GM12878 (cell line): ENCODE measurements at regions of chr11 and their contacts with region 1.

Region 1: GRCh38 chr11:96012086-96012824 is 88.3 kb upstream of the MTMR2 start:
- DNase-seq: peak; percentile 96
- ATAC-seq: peak; percentile 93
- H3K4me3 ChIP-seq: no peak overlapping the region
- H3K27ac ChIP-seq: peak overlapping the region; percentile 59
- H3K4me1 ChIP-seq: peaks cover 32% of the 10 kb centered on the region
- H3K27me3 ChIP-seq: no peaks in the 10 kb centered on the region
- CTCF ChIP-seq: peak; percentile 78 to 91 (median 87)
- EP300 ChIP-seq: peak; percentile 76 to 86; a peak in 2 of 4 replicates
- POLR2A ChIP-seq: no peak
- RAD21 ChIP-seq: peak; percentile 84

Region 2: GRCh38 chr11:96033599-96033998 is 21.3 kb after region 1 on chr11:
- CTCF ChIA-PET with region 1: interaction called, 6 read pairs
- POLR2A ChIA-PET with region 1: interaction called, 4 read pairs
- RAD21 ChIA-PET with region 1: interaction called, 10 read pairs
- SMC1A ChIA-PET with region 1: interaction called, 12 read pairs
- in situ Hi-C with region 1: no loop called
- intact Hi-C with region 1: no loop called
- DNase-seq: no peak
- ATAC-seq: no peak
- H3K4me3 ChIP-seq: no peak overlapping the region
- H3K27ac ChIP-seq: no peak overlapping the region
- H3K4me1 ChIP-seq: peaks cover 26% of the 10 kb centered on the region
- H3K27me3 ChIP-seq: no peaks in the 10 kb centered on the region
- CTCF ChIP-seq: no peak
- EP300 ChIP-seq: no peak
- POLR2A ChIP-seq: no peak
- RAD21 ChIP-seq: no peak

Region 3: DNA sequence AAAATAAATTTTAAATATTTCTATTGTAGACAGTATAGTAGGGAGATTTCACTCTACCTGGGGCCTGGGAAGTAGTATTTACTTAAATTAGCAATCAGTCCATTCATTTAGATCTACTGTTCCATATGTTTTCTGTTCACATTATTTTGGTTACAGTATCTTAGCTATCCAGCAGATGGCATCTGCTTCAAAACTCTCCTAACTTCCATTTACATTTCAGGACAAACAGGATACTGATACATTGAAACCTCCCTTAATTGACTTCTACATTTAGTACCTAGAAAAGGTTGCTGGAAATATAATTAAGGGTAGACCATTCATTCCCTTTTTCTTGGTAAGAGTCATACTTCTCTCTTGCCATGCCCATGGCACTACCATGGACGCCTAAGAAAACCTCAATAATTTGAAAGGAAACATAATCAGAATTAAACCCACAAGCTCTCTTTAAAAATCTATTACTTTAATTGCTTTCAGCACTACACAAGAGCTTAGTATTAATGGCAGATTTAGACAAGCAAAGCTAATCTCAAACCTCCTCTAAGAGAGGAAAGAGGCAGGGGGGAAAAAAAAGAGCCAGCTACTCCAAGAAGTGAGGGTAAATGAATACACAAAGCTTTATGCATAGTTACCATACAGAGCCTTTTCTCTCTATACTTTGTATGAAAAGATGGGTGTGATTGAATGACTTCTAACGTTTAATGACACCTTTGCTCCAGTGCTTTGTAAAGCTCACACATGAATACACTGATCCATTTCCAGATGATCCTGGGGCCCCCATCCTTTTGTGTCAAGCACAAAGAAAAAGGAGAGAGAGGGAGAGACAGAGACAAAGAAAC is 42.8 kb after region 1 on chr11:
- CTCF ChIA-PET with region 1: interaction called, 73 read pairs
- POLR2A ChIA-PET with region 1: interaction called, 3 read pairs
- RAD21 ChIA-PET with region 1: interaction called, 69 read pairs
- SMC1A ChIA-PET with region 1: interaction called, 85 read pairs
- in situ Hi-C with region 1: no loop called
- intact Hi-C with region 1: loop called (anchors 1 kb)
- DNase-seq: no peak
- ATAC-seq: no peak
- H3K4me3 ChIP-seq: no peak overlapping the region
- H3K27ac ChIP-seq: no peak overlapping the region
- H3K4me1 ChIP-seq: peaks cover 27% of the 10 kb centered on the region
- H3K27me3 ChIP-seq: no peaks in the 10 kb centered on the region
- CTCF ChIP-seq: peak; percentile 46 to 58 (median 48)
- EP300 ChIP-seq: no peak
- POLR2A ChIP-seq: no peak
- RAD21 ChIP-seq: peak; percentile 63

Region 4: GRCh38 chr11:96075532-96075959 is 63.3 kb after region 1 on chr11:
- CTCF ChIA-PET with region 1: interaction called, 10 read pairs
- POLR2A ChIA-PET with region 1: interaction called, 4 read pairs
- RAD21 ChIA-PET with region 1: interaction called, 4 read pairs
- SMC1A ChIA-PET with region 1: interaction called, 24 read pairs
- in situ Hi-C with region 1: no loop called
- intact Hi-C with region 1: loop called (anchors 5 kb)
- DNase-seq: peak; percentile 74
- ATAC-seq: peak; percentile 93
- H3K4me3 ChIP-seq: 0 out of 2 replicates have a peak overlapping the region, but pooled peaks have one; percentile 30
- H3K27ac ChIP-seq: peak overlapping the region; percentile 62
- H3K4me1 ChIP-seq: peaks cover 27% of the 10 kb centered on the region
- H3K27me3 ChIP-seq: no peaks in the 10 kb centered on the region
- CTCF ChIP-seq: no peak
- EP300 ChIP-seq: peak; percentile 17 to 36; a peak in 1 of 4 replicates
- POLR2A ChIP-seq: no peak
- RAD21 ChIP-seq: no peak

Region 5: GRCh38 chr11:96112201-96113128 is 100.2 kb after region 1 on chr11:
- CTCF ChIA-PET with region 1: interaction called, 3 read pairs
- POLR2A ChIA-PET with region 1: interaction called, 3 read pairs
- RAD21 ChIA-PET with region 1: interaction called, 3 read pairs
- SMC1A ChIA-PET with region 1: interaction called, 3 read pairs
- in situ Hi-C with region 1: no loop called
- intact Hi-C with region 1: loop called (anchors 2 kb)
- DNase-seq: peak; percentile 58
- ATAC-seq: peak; percentile 96
- H3K4me3 ChIP-seq: no peak overlapping the region
- H3K27ac ChIP-seq: peak overlapping the region; percentile 76
- H3K4me1 ChIP-seq: peaks cover 32% of the 10 kb centered on the region
- H3K27me3 ChIP-seq: no peaks in the 10 kb centered on the region
- CTCF ChIP-seq: no peak
- EP300 ChIP-seq: peak; percentile 48 to 51; a peak in 2 of 4 replicates
- POLR2A ChIP-seq: no peak
- RAD21 ChIP-seq: peak; percentile 17; the same call in 1 of the 2 replicates

Region 6: DNA sequence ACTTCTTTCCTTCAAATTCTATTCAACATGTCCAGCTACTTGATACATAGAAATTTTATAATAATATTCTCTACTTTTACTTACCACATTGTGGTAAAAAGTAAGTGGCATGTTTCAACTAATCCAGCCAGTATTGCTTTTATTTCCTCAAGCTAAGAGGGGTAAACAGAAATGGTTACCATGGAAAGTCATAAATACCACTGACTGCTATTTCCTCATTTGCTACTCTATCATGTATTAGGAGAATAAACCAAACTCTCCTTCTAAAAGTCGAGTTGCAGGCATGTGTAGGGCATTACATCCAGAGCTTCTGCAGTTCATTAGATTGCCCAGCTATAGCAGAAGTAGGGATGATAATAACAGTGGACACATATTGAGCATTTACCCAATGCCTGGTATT is 122.3 kb after region 1 on chr11:
- CTCF ChIA-PET with region 1: no interaction called
- POLR2A ChIA-PET with region 1: no interaction called
- RAD21 ChIA-PET with region 1: no interaction called
- SMC1A ChIA-PET with region 1: no interaction called
- in situ Hi-C with region 1: no loop called
- intact Hi-C with region 1: no loop called
- DNase-seq: no peak
- ATAC-seq: peak; percentile 70
- H3K4me3 ChIP-seq: no peak overlapping the region
- H3K27ac ChIP-seq: no peak overlapping the region
- H3K4me1 ChIP-seq: peaks cover 7% of the 10 kb centered on the region; the same call in 1 of the 2 replicates
- H3K27me3 ChIP-seq: no peaks in the 10 kb centered on the region
- CTCF ChIP-seq: no peak
- EP300 ChIP-seq: no peak
- POLR2A ChIP-seq: no peak
- RAD21 ChIP-seq: no peak

Region 7: DNA sequence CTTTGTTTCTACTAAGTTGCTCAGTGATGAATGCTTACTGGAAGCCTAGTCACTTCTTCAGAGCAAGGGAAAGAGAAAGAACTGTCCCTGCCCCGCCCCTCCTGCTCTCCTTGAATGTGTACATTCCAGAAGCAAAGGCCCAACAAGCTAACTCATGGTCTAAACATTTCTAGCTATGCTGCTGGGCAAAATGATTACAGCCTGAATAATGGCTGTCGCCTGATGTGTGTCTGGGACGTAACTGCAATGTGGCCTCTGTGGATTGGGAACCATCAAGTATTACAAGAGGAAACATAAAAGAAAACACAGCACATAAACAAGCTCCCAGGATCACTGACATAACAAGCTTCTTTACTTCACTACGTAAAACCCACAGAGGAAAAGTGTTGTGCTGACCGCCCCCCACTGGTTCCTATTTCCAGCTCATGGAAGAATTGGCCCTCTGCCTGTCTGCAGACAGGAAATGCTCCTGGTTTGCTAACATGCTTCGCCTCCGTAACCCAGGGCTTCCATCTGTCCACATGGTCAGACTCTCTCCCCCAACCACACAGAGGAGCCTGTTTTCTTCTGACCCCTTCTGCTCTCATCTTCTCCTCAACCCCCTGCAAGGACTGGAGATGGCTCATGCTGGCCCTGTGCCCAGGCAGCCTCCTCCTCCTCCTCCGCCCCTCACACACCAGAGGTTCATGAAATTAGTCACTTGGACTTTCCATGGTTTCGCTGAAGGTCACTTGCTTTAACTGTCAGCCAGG is 143.5 kb after region 1 on chr11:
- CTCF ChIA-PET with region 1: interaction called, 3 read pairs
- POLR2A ChIA-PET with region 1: interaction called, 3 read pairs
- RAD21 ChIA-PET with region 1: no interaction called
- SMC1A ChIA-PET with region 1: interaction called, 12 read pairs
- in situ Hi-C with region 1: no loop called
- intact Hi-C with region 1: no loop called
- DNase-seq: peak; percentile 76
- ATAC-seq: peak; percentile 89
- H3K4me3 ChIP-seq: 0 out of 2 replicates have a peak overlapping the region, but pooled peaks have one; percentile 2
- H3K27ac ChIP-seq: peak overlapping the region; percentile 87
- H3K4me1 ChIP-seq: peaks cover 37% of the 10 kb centered on the region
- H3K27me3 ChIP-seq: no peaks in the 10 kb centered on the region
- CTCF ChIP-seq: peak in 2 of 3 experiments; percentile 17 to 19; a peak in 3 of 6 replicates
- EP300 ChIP-seq: peak in 1 of 2 experiments; percentile 82; a peak in 3 of 4 replicates
- POLR2A ChIP-seq: no peak
- RAD21 ChIP-seq: peak; percentile 18

Region 8: DNA sequence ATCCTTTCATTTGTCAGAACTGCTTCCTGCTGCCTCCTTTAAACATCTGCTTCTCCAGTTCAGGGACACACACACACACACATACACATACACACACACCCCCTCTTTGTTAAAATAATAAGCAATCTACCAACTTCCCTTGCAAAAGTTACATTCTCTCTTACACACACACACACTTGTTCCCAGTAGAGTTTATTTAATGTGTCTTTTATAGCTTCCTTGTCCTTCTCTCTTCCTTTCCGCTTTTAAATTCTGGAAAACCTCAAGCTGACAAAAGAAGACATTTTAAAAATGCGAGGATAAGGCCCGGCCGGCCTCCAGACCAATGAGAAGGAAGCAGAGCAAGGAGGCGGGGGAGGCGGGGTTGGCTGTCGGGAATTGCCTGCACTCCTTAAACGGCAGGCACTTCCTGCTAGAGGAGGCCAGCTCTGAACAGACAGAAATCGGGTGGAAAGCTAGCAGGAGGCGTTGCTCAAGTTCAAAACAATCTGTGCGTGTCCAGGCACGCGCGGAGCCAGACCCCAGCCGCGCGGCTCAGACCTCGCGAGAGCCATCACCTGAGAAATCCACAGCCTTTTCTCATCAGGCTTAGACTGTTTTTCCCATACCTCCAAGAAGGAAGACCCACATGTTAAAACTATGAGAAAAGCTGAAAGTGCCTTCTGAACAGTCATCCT is 230.9 kb after region 1 on chr11:
- CTCF ChIA-PET with region 1: no interaction called
- POLR2A ChIA-PET with region 1: interaction called, 5 read pairs
- RAD21 ChIA-PET with region 1: interaction called, 3 read pairs
- SMC1A ChIA-PET with region 1: interaction called, 6 read pairs
- in situ Hi-C with region 1: no loop called
- intact Hi-C with region 1: loop called (anchors 5 kb)
- DNase-seq: peak; percentile 86
- ATAC-seq: peak; percentile 93
- H3K4me3 ChIP-seq: peak overlapping the region; percentile 60
- H3K27ac ChIP-seq: peak overlapping the region; percentile 68
- H3K4me1 ChIP-seq: peaks cover 14% of the 10 kb centered on the region; the same call in 1 of the 2 replicates
- H3K27me3 ChIP-seq: no peaks in the 10 kb centered on the region
- CTCF ChIP-seq: no peak
- EP300 ChIP-seq: no peak
- POLR2A ChIP-seq: peak; percentile 73
- RAD21 ChIP-seq: no peak; the same call in 1 of the 2 replicates